ENCODE measurements at regions of chr22 and their contacts with region 1.

Region 1: DNA sequence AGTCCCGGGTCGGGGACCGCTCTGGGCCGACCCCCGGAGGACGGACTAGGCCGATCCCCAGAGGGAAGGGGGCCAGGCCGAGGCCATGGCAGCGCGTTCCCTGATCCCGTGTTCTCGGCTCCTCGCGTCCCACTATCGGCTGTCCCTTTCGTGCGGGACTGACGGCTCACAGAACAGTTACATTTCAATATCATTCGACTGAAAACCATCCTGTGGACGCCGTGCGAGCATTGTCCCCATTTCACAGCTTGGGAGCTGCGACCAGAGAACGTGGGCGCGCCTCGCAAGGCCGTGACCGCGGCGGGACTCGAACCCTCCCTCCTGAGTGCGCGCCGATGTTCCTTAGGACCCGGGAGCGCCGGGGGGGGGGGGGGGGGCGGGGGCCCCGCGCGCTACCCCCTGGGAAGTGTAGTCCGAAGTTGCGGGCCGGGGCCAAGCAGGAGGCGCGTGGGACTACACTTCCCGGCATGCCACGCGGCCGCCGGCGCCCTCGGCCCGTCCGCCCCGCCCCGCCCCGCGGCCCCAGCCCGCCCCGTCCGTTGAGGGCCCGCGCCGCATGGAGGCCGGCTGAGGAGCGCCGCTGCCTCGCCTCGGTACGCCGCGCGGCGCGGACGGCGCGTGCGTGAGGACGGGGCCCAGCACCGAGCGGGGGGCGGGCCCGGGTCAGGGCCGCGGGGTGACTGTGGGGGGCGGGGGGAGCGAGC is at the start of gene TRABD:
- DNase-seq: peak; percentile 92
- ATAC-seq: peak; percentile 60
- H3K4me3 ChIP-seq: peak within 1 kb of the TSS; percentile 52 to 76 (median 61)
- H3K4me3 Mint-ChIP-seq: peak within 1 kb of the TSS; percentile 90
- H3K27ac ChIP-seq: peak within 1 kb of the TSS; percentile 38 to 71
- H3K27ac Mint-ChIP-seq: peak within 1 kb of the TSS; percentile 86
- H3K4me1 ChIP-seq: peaks cover 50 to 54% of the 10 kb centered on the region in 2 donors
- H3K4me1 Mint-ChIP-seq: peaks cover 36% of the 10 kb centered on the region
- H3K27me3 ChIP-seq: peaks cover 0 to 17% (median 2%) of the 10 kb centered on the region in 4 experiments
- H3K27me3 Mint-ChIP-seq: no peaks in the 10 kb centered on the region
- CTCF ChIP-seq: no peak
- total RNA-seq, gene TRABD: 200 and 205 TPM in 2 replicates

Region 2: GRCh38 chr22:49930739-49931412 is 254.7 kb before region 1 on chr22:
- CTCF ChIA-PET with region 1: interaction called, 12 read pairs
- POLR2A ChIA-PET with region 1: interaction called, 19 read pairs
- intact Hi-C with region 1: loop called (anchors 2 kb)
- DNase-seq: peak; percentile 92
- ATAC-seq: peak; percentile 42
- H3K4me3 ChIP-seq: peak overlapping the region in 4 of 5 experiments; percentile 4 to 29 (median 25)
- H3K4me3 Mint-ChIP-seq: peak overlapping the region; percentile 77
- H3K27ac ChIP-seq: peak overlapping the region; percentile 94 to 97
- H3K27ac Mint-ChIP-seq: peak overlapping the region; percentile 95
- H3K4me1 ChIP-seq: peaks cover 56 to 69% of the 10 kb centered on the region in 2 donors
- H3K4me1 Mint-ChIP-seq: peaks cover 53% of the 10 kb centered on the region
- H3K27me3 ChIP-seq: no peaks in the 10 kb centered on the region
- H3K27me3 Mint-ChIP-seq: no peaks in the 10 kb centered on the region
- CTCF ChIP-seq: peak; percentile 80

Region 3: DNA sequence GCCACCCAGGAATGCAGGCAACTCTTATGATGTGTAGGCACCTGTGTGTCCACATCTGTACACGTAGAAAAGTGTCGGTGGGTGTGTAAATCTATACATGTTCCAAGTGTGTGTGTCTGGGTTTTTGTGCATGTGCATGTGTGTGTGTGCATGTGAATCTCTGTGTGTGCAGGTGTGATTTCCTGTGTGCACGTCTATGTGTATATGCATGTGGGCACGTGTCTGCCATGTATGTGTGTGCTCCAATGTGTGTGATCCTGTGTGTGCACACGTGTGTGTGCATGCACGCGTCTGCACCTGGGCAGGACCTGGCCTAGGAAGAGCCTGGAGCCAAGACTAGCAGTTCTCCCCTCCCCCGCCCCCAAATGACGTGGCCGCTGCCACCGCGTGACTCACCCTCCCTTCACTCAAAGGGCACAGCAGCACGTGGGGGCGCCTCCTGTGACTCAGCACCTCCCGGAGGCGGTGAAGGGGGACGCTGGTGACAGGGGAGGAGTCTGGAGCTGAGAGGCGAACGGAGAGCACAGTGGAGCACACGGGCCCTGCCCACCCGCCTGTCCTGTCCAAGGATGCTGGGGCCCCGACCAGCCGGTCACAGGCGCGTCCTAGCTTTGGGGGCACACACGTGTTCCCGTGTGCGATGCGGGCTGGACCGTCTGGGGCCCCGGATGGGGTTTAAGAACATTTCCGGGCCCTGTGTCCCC is 214.9 kb before region 1 on chr22:
- CTCF ChIA-PET with region 1: interaction called, 4 read pairs
- POLR2A ChIA-PET with region 1: interaction called, 3 read pairs
- intact Hi-C with region 1: loop called (anchors 2 kb)
- DNase-seq: peak; percentile 95
- ATAC-seq: peak; percentile 85
- H3K4me3 ChIP-seq: peak overlapping the region in 4 of 5 experiments; percentile 41 to 65 (median 55)
- H3K4me3 Mint-ChIP-seq: peak overlapping the region; percentile 84
- H3K27ac ChIP-seq: peak overlapping the region in 1 of 2 donors; percentile 40
- H3K27ac Mint-ChIP-seq: peak overlapping the region; percentile 96
- H3K4me1 ChIP-seq: peaks cover 43 to 56% of the 10 kb centered on the region in 2 donors
- H3K4me1 Mint-ChIP-seq: peaks cover 40% of the 10 kb centered on the region
- H3K27me3 ChIP-seq: no peaks in the 10 kb centered on the region
- H3K27me3 Mint-ChIP-seq: no peaks in the 10 kb centered on the region
- CTCF ChIP-seq: no peak

Region 4: GRCh38 chr22:50139843-50140415 is 45.6 kb before region 1 on chr22:
- CTCF ChIA-PET with region 1: no interaction called
- POLR2A ChIA-PET with region 1: no interaction called
- intact Hi-C with region 1: no loop called
- DNase-seq: no peak
- ATAC-seq: peak; percentile 41
- H3K4me3 ChIP-seq: no peak overlapping the region
- H3K4me3 Mint-ChIP-seq: no peak overlapping the region
- H3K27ac ChIP-seq: no peak overlapping the region
- H3K27ac Mint-ChIP-seq: no peak overlapping the region
- H3K4me1 ChIP-seq: no peaks in the 10 kb centered on the region
- H3K4me1 Mint-ChIP-seq: peaks cover 4% of the 10 kb centered on the region
- H3K27me3 ChIP-seq: no peaks in the 10 kb centered on the region
- H3K27me3 Mint-ChIP-seq: peaks cover 27% of the 10 kb centered on the region
- CTCF ChIP-seq: no peak

Region 5: GRCh38 chr22:50200461-50201190 is 15.1 kb after region 1 on chr22 and contains the start of gene SELENOO:
- CTCF ChIA-PET with region 1: interaction called, 41 read pairs
- POLR2A ChIA-PET with region 1: interaction called, 43 read pairs
- intact Hi-C with region 1: loop called (anchors 1 kb)
- DNase-seq: peak; percentile 96
- ATAC-seq: peak; percentile 92
- H3K4me3 ChIP-seq: peak within 1 kb of the TSS; percentile 25 to 80 (median 70)
- H3K4me3 Mint-ChIP-seq: peak within 1 kb of the TSS; percentile 89
- H3K27ac ChIP-seq: peak within 1 kb of the TSS; percentile 23 to 81
- H3K27ac Mint-ChIP-seq: peak within 1 kb of the TSS; percentile 86
- H3K4me1 ChIP-seq: peaks cover 16 to 26% of the 10 kb centered on the region in 2 donors
- H3K4me1 Mint-ChIP-seq: peaks cover 26% of the 10 kb centered on the region
- H3K27me3 ChIP-seq: no peaks in the 10 kb centered on the region
- H3K27me3 Mint-ChIP-seq: no peaks in the 10 kb centered on the region
- CTCF ChIP-seq: no peak
- total RNA-seq, gene SELENOO: 73.0 and 74.6 TPM in 2 replicates

Region 6: GRCh38 chr22:50293441-50294318 is 108.1 kb after region 1 on chr22:
- CTCF ChIA-PET with region 1: no interaction called
- POLR2A ChIA-PET with region 1: interaction called, 10 read pairs
- intact Hi-C with region 1: no loop called
- DNase-seq: peak; percentile 73
- ATAC-seq: peak; percentile 58
- H3K4me3 ChIP-seq: peak overlapping the region in 1 of 5 experiments; percentile 33
- H3K4me3 Mint-ChIP-seq: peak overlapping the region; percentile 64
- H3K27ac ChIP-seq: no peak overlapping the region
- H3K27ac Mint-ChIP-seq: peak overlapping the region; percentile 46
- H3K4me1 ChIP-seq: peaks cover 37 to 44% of the 10 kb centered on the region in 2 donors
- H3K4me1 Mint-ChIP-seq: peaks cover 41% of the 10 kb centered on the region
- H3K27me3 ChIP-seq: peaks cover 0 to 32% (median 12%) of the 10 kb centered on the region in 4 experiments
- H3K27me3 Mint-ChIP-seq: peaks cover 17% of the 10 kb centered on the region
- CTCF ChIP-seq: no peak

Measured in B cell (primary cell).